MCF 10A (cell line): ENCODE measurements at regions of chr5 and their contacts with region 1.

Region 1: GRCh38 chr5:139670369-139671095 is 22.4 kb downstream of the CXXC5 start:
- DNase-seq: no peak
- H3K4me3 Mint-ChIP-seq: no peak overlapping the region
- H3K27ac Mint-ChIP-seq: peak overlapping the region; percentile 93
- H3K4me1 Mint-ChIP-seq: peaks cover 25% of the 10 kb centered on the region
- H3K27me3 Mint-ChIP-seq: no peaks in the 10 kb centered on the region
- CTCF ChIP-seq: peak; percentile 20

Region 2: GRCh38 chr5:139651853-139652787 is 18.4 kb before region 1 on chr5:
- CTCF ChIA-PET with region 1: interaction called, 5 read pairs
- POLR2A ChIA-PET with region 1: interaction called, 6 read pairs
- intact Hi-C with region 1: loop called (anchors 1 kb)
- DNase-seq: peak; percentile 87
- H3K4me3 Mint-ChIP-seq: peak overlapping the region; percentile 87
- H3K27ac Mint-ChIP-seq: peak overlapping the region; percentile 33
- H3K4me1 Mint-ChIP-seq: peaks cover 30% of the 10 kb centered on the region
- H3K27me3 Mint-ChIP-seq: no peaks in the 10 kb centered on the region
- CTCF ChIP-seq: no peak

Region 3: DNA sequence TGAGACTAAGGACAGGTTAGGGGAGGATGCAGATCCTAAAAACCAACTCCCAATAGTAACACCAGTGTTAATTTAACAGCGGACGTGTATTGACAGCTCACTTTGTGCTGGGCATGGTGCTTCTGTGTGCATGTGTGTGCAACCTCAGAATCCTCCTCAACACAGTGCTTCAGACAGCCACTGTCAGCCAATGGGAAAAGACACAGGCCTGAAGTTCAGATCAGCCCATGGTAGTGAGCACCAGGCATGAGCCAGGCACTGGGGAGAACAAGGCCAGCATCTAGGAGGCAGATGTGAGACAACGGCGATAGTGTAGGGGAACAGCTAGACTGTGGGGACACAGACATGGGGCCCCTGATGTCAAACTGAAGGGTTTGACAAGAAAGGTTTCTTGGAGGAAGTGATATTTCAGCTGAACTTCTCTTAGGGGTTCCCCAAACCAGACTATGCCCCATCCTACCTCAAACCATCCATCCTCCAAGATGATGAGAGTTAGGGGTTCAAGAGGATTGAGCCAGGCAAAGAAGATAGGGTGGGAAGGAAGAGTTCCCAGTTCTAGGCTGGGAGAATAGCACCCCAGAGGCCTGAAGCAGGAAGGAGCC is 53.6 kb after region 1 on chr5:
- CTCF ChIA-PET with region 1: no interaction called
- POLR2A ChIA-PET with region 1: no interaction called
- intact Hi-C with region 1: no loop called
- DNase-seq: no peak
- H3K4me3 Mint-ChIP-seq: no peak overlapping the region
- H3K27ac Mint-ChIP-seq: no peak overlapping the region
- H3K4me1 Mint-ChIP-seq: no peaks in the 10 kb centered on the region
- H3K27me3 Mint-ChIP-seq: no peaks in the 10 kb centered on the region
- CTCF ChIP-seq: no peak